CD4-positive, alpha-beta memory T cell (primary cell): ENCODE measurements at regions of chr20 and their contacts with region 1.

Region 1: DNA sequence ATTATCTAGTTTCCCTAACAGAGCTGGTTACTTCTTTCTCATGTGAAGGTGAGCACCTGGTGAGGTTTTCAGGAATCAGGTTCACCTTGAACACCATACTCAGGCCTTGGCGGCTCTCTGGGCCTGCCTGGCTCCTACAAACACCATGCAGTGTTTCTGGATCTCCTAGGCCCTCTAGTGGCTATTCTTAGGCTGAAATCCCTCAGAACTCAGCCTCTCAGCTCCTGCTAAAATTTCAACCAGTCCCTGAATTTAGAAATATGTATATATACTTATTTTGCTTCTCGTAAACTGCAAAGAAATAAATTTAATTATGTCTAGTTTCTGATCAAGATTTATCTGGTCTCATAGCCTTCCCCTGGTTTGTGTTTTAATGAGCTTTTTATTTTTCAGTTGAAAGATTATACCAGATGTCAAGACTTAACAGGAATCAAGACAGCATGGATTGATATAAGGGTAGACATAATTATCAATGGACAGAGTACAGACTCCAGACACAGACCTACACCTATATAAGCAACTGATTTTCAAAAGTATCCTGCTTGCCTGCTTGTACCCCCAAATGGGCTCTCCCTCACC is 55.9 kb downstream of the ANKEF1 start:
- DNase-seq: peak in 4 of 5 donors; percentile 17 to 39 (median 22)
- H3K4me3 ChIP-seq: no peak overlapping the region
- H3K4me3 Mint-ChIP-seq: no peak overlapping the region
- H3K27ac ChIP-seq: no peak overlapping the region
- H3K27ac Mint-ChIP-seq: no peak overlapping the region
- H3K4me1 ChIP-seq: no peaks in the 10 kb centered on the region
- H3K4me1 Mint-ChIP-seq: no peaks in the 10 kb centered on the region
- H3K27me3 ChIP-seq: no peaks in the 10 kb centered on the region
- H3K27me3 Mint-ChIP-seq: peaks cover 4 to 5% of the 10 kb centered on the region in 2 donors

Region 2: DNA sequence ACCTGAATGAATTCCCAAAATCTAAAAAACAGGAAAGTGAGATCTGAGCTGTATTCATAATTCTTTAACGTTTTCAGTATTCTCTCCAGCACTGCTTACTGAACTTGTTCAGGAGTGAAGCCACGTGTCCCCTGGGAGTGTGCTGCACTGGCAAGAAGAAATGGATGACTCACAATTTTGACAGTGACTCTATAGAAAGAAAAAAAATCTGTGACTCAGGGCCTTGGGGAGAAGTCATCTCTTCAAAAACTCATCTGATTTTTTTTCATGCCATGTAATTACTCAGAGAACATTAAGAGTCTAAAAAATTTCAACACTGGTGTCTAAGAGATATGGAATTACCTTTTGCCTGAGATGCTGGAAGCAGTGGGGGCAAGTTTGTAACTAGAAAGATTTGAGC is 16.2 kb before region 1 on chr20:
- CTCF ChIA-PET with region 1: interaction called, 33 read pairs
- POLR2A ChIA-PET with region 1: no interaction called
- intact Hi-C with region 1: no loop called
- DNase-seq: no peak
- H3K4me3 ChIP-seq: no peak overlapping the region
- H3K4me3 Mint-ChIP-seq: no peak overlapping the region
- H3K27ac ChIP-seq: no peak overlapping the region
- H3K27ac Mint-ChIP-seq: no peak overlapping the region
- H3K4me1 ChIP-seq: no peaks in the 10 kb centered on the region
- H3K4me1 Mint-ChIP-seq: no peaks in the 10 kb centered on the region
- H3K27me3 ChIP-seq: no peaks in the 10 kb centered on the region
- H3K27me3 Mint-ChIP-seq: peaks cover 16 to 20% of the 10 kb centered on the region in 2 donors

Region 3: GRCh38 chr20:10105046-10105445 is 14.4 kb after region 1 on chr20:
- CTCF ChIA-PET with region 1: interaction called, 35 read pairs
- POLR2A ChIA-PET with region 1: no interaction called
- intact Hi-C with region 1: no loop called
- DNase-seq: no peak
- H3K4me3 ChIP-seq: no peak overlapping the region
- H3K4me3 Mint-ChIP-seq: no peak overlapping the region
- H3K27ac ChIP-seq: no peak overlapping the region
- H3K27ac Mint-ChIP-seq: no peak overlapping the region
- H3K4me1 ChIP-seq: no peaks in the 10 kb centered on the region
- H3K4me1 Mint-ChIP-seq: no peaks in the 10 kb centered on the region
- H3K27me3 ChIP-seq: no peaks in the 10 kb centered on the region
- H3K27me3 Mint-ChIP-seq: peaks cover 0 to 1% of the 10 kb centered on the region in 2 donors

Region 4: DNA sequence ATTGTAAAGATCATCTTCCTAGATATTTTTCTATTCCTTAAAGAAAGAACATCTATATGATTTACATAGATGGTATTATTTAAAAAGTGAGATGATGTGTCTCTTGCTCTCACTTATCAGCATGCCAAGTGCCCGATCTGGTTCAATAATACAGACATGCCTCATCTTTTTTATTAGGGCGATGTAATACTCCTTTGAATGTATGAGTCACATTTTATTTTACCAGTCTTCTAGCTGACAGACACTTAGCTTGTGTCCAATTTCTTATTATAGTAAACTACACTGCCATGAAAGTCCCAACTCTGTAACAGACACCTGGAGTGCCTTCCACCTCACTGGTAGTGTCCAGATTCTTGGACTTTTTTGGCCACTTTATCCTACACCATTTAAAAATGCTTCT is 1240.4 kb after region 1 on chr20:
- CTCF ChIA-PET with region 1: no interaction called
- POLR2A ChIA-PET with region 1: no interaction called
- intact Hi-C with region 1: no loop called
- DNase-seq: no peak
- H3K4me3 ChIP-seq: no peak overlapping the region
- H3K4me3 Mint-ChIP-seq: no peak overlapping the region
- H3K27ac ChIP-seq: no peak overlapping the region
- H3K27ac Mint-ChIP-seq: no peak overlapping the region
- H3K4me1 ChIP-seq: no peaks in the 10 kb centered on the region
- H3K4me1 Mint-ChIP-seq: no peaks in the 10 kb centered on the region
- H3K27me3 ChIP-seq: no peaks in the 10 kb centered on the region
- H3K27me3 Mint-ChIP-seq: no peaks in the 10 kb centered on the region